ENCODE measurements at regions of chr9 and their contacts with region 1.

Region 1: DNA sequence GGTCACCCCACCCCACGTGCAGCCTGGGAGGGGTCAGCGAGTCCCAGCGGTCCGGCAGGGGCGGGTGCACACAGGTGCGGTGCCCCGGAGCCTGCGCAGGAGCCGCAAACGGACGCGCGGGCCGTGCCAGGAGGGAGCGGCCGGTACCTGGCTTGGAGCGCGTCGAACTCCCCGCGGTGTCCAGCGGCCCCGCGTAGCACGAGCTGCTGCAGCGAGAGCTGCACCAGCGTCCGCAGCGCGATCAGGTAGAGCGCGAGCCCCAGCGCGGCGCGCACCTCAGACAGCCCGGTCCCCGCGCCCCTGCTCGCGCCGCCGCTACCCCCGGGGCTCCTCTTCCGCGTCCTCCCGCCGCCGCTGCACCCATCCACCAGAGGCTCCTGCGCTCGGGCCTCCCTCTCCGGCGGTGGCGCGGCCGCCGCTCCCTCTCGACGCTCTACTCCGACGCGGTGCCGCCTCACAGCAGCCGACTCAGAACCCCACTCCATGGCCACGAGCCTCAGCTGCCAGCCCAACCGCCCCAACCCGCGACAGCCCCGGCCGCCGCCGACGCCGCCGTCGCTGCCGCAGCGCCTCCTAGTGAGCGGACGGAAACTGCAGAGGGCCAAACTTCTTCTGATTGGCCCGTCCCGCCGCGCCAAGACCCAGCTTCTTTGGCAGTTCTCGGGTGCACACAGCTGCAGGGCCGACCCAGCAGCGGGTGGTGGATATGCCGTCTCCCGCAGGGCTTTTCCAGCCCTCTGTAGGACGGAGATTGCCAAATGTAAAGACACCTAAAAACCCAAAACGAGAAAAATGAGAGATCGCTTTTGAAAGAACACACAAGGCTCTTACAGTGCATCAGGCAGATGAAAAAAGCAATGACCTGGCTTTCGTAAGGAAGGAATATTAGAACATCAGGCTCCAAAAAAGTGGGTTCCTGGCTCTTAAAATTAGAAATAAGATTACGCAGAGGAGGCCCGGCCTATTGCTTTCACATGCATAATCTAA is at the start of gene ERMP1:
- H3K4me3 ChIP-seq: peak within 1 kb of the TSS; percentile 76
- H3K27ac ChIP-seq: peak within 1 kb of the TSS; percentile 58; the same call in 1 of the 2 replicates
- H3K4me1 ChIP-seq: peaks cover 4% of the 10 kb centered on the region; the same call in 1 of the 2 replicates
- CTCF ChIP-seq: peak; percentile 94

Region 2: DNA sequence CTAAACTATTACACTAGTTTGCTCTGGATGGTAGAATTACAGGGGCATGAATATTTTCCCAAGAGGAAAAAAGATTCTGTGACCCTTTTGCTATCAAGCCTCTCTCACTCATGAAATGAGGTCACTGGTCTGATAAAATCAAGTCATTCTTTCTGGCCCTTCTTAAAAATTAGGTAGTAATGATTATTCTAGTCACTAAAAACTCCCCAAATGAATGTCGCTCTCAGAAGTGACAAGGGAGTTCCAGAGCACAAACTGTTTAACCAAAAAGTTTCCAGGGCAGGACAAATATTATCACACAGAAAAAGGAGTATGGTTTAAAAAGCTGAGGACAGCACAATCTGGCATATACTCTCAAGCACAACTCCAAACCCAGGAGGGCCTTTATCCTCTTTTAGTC is 12.4 kb before region 1 on chr9:
- CTCF ChIA-PET with region 1: interaction called, 24 read pairs
- POLR2A ChIA-PET with region 1: no interaction called
- H3K4me3 ChIP-seq: no peak overlapping the region
- H3K27ac ChIP-seq: no peak overlapping the region
- H3K4me1 ChIP-seq: no peaks in the 10 kb centered on the region
- CTCF ChIP-seq: no peak

Region 3: DNA sequence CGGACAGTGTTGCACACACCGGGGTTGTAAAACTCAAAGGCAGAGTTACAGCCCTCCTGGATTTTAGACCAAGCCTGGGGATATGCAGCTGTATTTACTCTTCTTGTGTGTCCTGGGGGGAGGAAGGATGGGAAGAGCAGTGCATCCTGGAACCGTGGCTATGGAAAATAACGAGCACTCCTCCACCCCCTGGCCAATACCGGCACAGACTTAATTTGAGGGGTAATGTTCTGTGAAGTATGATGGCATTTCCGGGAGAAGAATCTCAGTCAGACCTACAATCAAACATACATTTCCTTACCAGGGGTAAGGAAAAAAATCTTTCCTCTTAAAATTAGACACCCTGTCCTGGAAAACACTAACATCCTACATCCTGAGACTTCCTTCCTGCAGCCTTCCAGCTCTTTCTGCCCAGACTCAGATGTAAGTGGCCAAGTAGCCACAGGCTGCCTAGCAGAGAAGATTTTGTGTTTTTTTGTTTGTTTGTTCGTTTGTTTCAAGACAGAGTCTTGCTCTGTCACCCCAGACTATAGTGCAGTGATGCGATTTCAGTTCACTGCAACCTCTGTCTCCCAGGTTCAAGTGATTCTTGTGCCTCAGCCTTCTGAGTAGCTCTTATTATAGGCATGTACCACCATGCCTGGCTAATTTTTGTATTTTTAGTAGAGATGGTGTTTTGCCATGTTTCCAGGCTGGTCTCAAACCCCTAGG is 11.1 kb after region 1 on chr9:
- CTCF ChIA-PET with region 1: interaction called, 39 read pairs
- POLR2A ChIA-PET with region 1: interaction called, 18 read pairs
- H3K4me3 ChIP-seq: no peak overlapping the region
- H3K27ac ChIP-seq: peak overlapping the region; percentile 83
- H3K4me1 ChIP-seq: peaks cover 21% of the 10 kb centered on the region
- CTCF ChIP-seq: no peak

Region 4: GRCh38 chr9:5863092-5863746 is 30.4 kb after region 1 on chr9:
- CTCF ChIA-PET with region 1: interaction called, 10 read pairs
- POLR2A ChIA-PET with region 1: interaction called, 4 read pairs
- H3K4me3 ChIP-seq: no peak overlapping the region
- H3K27ac ChIP-seq: no peak overlapping the region
- H3K4me1 ChIP-seq: no peaks in the 10 kb centered on the region
- CTCF ChIP-seq: no peak

Region 5: DNA sequence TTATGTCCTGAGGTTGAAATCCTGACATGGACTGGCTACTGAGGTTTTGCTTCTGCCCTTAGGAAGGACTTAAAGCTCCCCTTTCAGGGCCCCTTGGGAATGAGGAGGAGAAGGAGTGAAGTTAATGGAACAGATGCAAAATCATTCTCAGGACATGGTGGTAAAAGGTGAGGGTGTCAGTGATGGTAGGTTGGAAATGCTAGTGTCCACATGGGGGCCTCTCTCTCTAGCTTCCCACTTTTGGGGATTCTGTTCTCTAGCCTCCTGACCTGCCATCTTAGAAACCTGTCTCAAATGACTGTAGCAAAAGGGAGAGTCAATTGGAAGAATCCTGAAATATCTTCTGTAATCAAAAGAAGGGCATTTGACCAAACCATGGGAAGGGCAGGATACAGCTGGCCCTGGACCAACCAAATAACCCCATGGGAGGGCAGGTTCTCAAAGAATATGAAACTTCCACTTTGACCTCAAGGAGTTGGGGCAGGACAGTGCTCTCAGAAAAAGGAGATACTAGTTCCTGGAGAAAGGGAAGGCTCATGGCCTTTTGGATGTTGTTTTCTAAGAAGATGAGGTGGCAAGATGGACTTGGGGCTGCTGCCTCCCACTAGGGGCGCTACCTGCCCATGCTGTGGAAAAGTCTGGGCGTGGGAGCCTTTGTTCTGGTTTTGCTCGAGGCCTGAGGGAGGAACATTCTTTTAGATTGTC is 36.6 kb after region 1 on chr9:
- CTCF ChIA-PET with region 1: interaction called, 21 read pairs
- POLR2A ChIA-PET with region 1: no interaction called
- H3K4me3 ChIP-seq: no peak overlapping the region
- H3K27ac ChIP-seq: no peak overlapping the region
- H3K4me1 ChIP-seq: no peaks in the 10 kb centered on the region
- CTCF ChIP-seq: no peak

Region 6: DNA sequence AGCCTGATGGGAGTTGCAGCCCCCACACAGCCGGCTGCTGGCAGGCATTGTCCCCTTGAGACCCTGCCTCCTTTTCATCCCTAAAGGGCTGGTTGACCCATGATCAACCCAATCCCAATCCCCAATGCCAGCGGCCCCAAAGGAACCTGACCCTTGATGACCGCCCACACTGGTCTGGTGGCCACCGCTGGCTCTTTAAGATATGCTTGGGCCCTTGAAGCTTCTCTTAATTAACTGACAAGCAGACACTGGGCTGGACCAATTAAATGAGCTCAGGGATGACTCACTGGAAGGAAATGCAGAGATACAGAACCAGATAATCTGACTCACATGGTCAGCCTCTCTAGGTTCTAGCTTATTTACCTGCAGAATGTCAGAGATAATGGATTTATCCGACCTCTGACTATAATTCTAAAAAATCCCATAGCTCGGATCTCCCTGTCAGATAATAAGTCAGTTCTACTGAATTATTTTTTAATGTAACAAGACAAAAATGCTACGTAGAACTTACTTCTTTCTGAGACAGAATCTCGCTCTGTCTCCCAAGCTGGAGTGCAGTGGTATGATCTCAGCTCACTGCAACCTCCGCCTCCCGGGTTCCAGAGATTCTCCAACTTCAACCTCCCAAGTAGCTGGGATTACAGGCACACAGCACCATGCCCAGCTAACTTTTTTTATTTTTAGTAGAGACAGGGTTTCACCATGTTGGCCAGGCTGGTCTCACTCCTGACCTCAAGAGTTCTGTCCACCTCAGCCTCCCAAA is 46.8 kb after region 1 on chr9:
- CTCF ChIA-PET with region 1: interaction called, 9 read pairs
- POLR2A ChIA-PET with region 1: interaction called, 12 read pairs
- H3K4me3 ChIP-seq: peak overlapping the region; percentile 19
- H3K27ac ChIP-seq: no peak overlapping the region
- H3K4me1 ChIP-seq: no peaks in the 10 kb centered on the region
- CTCF ChIP-seq: no peak

Region 7: GRCh38 chr9:6008169-6008979 is 175.5 kb after region 1 on chr9:
- CTCF ChIA-PET with region 1: no interaction called
- POLR2A ChIA-PET with region 1: interaction called, 18 read pairs
- H3K4me3 ChIP-seq: peak overlapping the region; percentile 76
- H3K27ac ChIP-seq: peak overlapping the region; percentile 80
- H3K4me1 ChIP-seq: peaks cover 4% of the 10 kb centered on the region; the same call in 1 of the 2 replicates
- CTCF ChIP-seq: no peak